ENCODE measurements at regions of chr17 and their contacts with region 1.

Region 1: GRCh38 chr17:46061435-46061834 is 62.4 kb downstream of the STH start:
- DNase-seq: no peak
- H3K4me3 ChIP-seq: no peak overlapping the region
- CTCF ChIP-seq: no peak

Region 2: DNA sequence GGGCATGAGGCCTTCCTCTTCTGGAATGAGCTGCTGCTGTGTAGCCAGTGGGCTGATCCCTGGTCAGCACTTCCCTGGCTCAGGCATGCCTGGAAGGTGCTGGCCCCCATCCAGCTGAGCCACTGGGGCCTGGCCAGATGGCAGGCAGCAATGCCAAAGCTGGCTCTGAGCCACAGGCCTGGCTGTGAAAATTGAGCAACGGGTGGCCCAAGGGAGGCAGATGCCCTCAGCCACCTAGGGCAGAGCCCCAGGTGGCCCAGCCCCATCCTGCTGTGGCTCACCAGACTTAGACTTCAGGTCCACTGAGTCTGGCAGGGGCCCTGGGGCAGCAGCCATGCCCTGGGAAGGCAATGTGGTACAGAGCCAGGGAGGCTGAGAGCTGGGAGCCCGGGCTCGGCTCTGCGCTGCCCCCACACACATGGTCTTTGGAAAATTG is 285.8 kb before region 1 on chr17:
- CTCF ChIA-PET with region 1: no interaction called
- POLR2A ChIA-PET with region 1: no interaction called
- DNase-seq: no peak
- H3K4me3 ChIP-seq: no peak overlapping the region
- CTCF ChIP-seq: no peak

Region 3: GRCh38 chr17:46072998-46073397 is 11.6 kb after region 1 on chr17:
- CTCF ChIA-PET with region 1: interaction called, 16 read pairs
- POLR2A ChIA-PET with region 1: no interaction called
- DNase-seq: peak; percentile 44
- H3K4me3 ChIP-seq: no peak overlapping the region
- CTCF ChIP-seq: no peak

Measured in AG04449 (cell line).